Endothelial cell of umbilical vein (primary cell): ENCODE measurements at regions of chr13 and their contacts with region 1.

Region 1: DNA sequence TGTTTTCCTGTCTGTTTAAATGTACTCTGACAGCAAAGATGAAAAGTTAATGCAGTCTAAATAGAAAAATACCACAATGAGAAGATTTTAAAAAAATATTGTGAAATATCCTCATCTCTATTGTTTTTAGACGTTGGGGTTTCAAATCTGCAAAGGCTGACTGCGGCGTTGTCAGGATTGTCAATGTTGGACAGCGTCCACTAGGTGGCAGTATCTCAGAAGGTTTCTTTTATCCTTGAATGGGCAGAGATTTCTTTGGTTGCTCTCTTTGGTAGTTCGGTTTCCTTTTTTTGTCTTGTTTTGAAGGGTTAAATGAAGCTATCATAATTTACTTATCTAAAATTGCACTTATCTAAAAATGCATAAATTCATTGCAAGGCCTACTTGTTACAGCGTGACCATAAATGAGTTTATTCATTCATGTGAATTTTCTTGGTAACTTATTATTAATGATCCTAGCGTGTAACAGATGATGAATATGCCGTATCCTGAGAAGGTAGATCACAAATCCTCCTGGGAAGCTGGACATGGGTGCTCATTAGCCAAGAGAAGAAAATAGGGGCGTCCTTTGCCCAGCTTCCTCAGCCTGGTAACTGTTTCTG is 21.1 kb downstream of the TNFSF11 start:
- DNase-seq: peak; percentile 62
- H3K4me3 ChIP-seq: no peak overlapping the region
- H3K27ac ChIP-seq: no peak overlapping the region
- H3K4me1 ChIP-seq: no peaks in the 10 kb centered on the region
- H3K27me3 ChIP-seq: peaks cover 3 to 10% of the 10 kb centered on the region in 2 experiments
- CTCF ChIP-seq: peak; percentile 72 to 75
- POLR2A ChIP-seq: no peak

Region 2: DNA sequence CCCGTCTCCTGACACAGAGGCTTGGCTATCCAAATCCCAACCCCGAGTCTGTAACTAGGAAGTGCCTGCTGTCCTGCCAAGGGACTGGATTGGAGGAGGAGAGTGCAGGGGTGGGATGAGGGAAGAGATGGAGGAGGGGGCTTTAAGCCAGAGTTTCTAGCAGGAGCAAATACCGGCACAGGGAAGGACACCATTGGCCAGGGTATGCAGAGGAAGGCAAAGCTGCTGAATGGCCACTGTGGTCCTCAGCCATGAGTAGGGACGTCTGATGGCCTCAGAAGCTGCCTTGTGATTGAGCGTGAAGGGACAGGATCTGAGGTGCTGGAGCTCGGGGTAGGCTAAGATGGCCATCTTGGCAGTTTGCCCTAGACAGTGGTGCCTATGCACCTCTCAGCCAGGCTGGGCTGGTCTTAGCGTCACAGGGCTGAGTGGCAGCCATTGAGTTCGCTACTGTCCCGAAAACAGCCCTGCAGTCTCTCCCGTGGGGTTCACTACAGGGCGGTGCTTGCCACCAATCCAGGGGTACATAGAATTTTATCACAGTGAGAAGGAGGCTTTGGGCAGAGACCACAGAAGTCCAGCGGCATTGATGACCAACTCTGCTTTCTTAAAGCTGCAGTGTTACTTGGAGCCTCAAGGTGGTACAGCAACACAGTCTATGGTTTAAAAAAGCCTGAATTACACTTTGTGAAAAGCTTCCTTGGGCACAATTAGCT is 261.3 kb before region 1 on chr13:
- CTCF ChIA-PET with region 1: interaction called, 13 read pairs
- POLR2A ChIA-PET with region 1: no interaction called
- dilution Hi-C with region 1: no loop called
- intact Hi-C with region 1: loop called (anchors 2 kb)
- DNase-seq: peak; percentile 21
- H3K4me3 ChIP-seq: no peak overlapping the region
- H3K27ac ChIP-seq: no peak overlapping the region
- H3K4me1 ChIP-seq: no peaks in the 10 kb centered on the region
- H3K27me3 ChIP-seq: peaks cover 2 to 3% of the 10 kb centered on the region in 2 experiments
- CTCF ChIP-seq: peak; percentile 25 to 36
- POLR2A ChIP-seq: no peak

Region 3: DNA sequence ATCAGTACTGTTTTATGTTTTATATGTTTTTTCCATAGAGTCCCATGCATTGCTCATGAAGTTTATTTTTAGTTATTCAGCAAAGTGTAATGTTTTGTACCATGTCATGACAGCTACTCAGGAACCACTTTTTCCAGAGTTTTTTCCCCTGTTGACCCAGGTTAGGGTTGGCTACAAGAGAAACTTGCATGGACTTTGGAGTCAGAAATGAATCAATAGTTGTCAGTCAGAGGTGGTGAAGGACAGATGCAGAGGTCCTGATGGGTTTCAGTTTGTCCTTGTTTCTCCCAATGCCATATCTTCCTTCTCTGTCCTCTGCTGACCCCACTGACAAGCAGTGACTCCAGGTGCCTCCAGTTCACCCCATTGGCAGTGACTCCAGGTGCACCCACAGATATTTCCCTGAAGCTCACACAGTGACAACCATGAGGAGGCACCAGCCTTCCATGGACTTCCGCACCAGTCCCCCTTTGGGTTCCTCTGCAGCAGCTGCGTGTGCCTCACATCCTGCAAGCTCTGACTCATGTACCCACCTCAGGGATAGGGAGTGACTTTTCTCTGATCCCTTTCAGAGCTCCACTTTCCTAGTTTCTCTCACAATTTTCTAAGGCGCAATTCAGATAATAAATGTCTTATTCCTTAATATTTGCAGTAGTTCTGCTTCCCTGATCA is 231.0 kb before region 1 on chr13:
- CTCF ChIA-PET with region 1: no interaction called
- POLR2A ChIA-PET with region 1: no interaction called
- dilution Hi-C with region 1: no loop called
- intact Hi-C with region 1: loop called (anchors 10 kb)
- DNase-seq: peak; percentile 38
- H3K4me3 ChIP-seq: no peak overlapping the region
- H3K27ac ChIP-seq: peak overlapping the region; percentile 13
- H3K4me1 ChIP-seq: peaks cover 4% of the 10 kb centered on the region
- H3K27me3 ChIP-seq: no peaks in the 10 kb centered on the region
- CTCF ChIP-seq: no peak
- POLR2A ChIP-seq: no peak

Region 4: GRCh38 chr13:42375663-42376062 is 219.4 kb before region 1 on chr13:
- CTCF ChIA-PET with region 1: no interaction called
- POLR2A ChIA-PET with region 1: no interaction called
- dilution Hi-C with region 1: no loop called
- intact Hi-C with region 1: no loop called
- DNase-seq: no peak
- H3K4me3 ChIP-seq: no peak overlapping the region
- H3K27ac ChIP-seq: no peak overlapping the region
- H3K4me1 ChIP-seq: no peaks in the 10 kb centered on the region
- H3K27me3 ChIP-seq: peaks cover 0 to 7% of the 10 kb centered on the region in 2 experiments
- CTCF ChIP-seq: no peak
- POLR2A ChIP-seq: no peak

Region 5: DNA sequence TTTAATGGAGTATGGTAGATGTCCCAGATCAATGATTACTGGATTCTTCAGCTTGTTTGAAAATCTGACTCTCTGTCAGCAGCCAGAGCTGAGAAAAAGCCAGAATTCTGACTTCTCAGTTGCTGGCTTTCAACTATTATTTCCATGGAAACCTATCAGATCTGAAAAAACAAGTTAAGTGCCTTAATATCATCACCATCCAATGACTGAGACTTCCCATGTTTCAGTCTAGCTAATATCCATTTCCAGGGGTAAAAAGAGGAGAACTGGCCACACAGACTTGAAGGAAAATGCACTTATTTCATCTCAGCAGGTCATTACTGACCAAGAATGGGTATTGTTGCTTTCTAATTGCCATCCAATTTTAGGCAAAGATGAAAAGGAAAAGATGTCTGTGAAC is 54.1 kb after region 1 on chr13:
- CTCF ChIA-PET with region 1: no interaction called
- POLR2A ChIA-PET with region 1: no interaction called
- dilution Hi-C with region 1: no loop called
- intact Hi-C with region 1: no loop called
- DNase-seq: no peak
- H3K4me3 ChIP-seq: no peak overlapping the region
- H3K27ac ChIP-seq: no peak overlapping the region
- H3K4me1 ChIP-seq: no peaks in the 10 kb centered on the region
- H3K27me3 ChIP-seq: peaks cover 0 to 7% of the 10 kb centered on the region in 2 experiments
- CTCF ChIP-seq: no peak
- POLR2A ChIP-seq: no peak